AG04449 (cell line): ENCODE measurements at regions of chr6 and their contacts with region 1.

Region 1: DNA sequence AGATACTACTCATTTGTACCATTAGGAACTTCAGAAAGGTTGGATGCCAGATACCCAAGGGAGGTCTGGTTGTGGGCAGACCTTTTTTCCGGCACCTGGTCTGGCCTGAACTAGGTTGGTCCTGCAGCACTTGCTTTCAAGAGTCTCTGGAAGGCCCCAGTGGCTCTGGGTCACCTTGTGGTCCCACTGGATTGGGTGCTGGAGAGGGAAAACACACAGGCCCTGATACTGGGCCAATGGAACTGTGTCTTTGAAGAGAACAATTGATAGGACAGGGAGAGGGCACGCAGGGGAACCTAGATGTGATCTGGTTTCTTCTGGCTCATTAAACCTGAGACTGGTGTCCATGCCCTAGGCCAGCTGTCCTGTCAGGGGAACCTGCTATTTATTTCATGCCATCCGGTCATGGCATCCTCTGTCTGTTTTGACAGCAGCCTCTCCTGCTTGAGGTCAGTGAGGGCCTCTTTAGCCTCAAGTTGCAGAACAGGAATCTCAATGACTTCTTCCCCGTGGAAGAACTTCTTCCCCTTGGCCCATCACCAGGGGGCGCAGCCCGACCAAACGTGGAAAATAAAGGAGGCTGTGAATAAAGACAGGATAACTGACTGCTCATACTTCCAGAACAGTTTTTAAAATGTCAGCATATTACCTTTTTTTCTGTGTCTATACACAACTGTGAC is 25.0 kb downstream of the TAF8 start:
- DNase-seq: no peak
- H3K4me3 ChIP-seq: no peak overlapping the region
- CTCF ChIP-seq: peak; percentile 79

Region 2: DNA sequence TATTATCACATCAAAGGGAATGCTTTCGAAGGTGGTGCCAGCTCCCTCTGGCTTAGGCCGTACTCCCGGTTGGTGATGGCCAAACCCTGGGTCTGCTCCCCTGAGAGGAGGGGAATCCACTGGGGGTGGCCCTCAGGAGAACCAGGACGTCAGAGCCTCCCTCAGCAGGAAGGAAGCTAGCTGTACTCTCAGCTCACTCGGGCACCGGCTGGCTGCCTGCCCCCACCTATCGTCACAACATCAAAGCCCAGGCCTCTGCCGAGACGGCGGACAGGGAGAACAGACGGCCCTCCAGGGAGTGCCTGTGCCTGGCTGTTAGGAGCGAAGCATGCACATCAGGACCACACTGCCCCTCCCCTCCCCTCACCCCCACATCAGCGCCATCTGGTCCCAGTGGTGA is 318.9 kb before region 1 on chr6:
- CTCF ChIA-PET with region 1: no interaction called
- POLR2A ChIA-PET with region 1: no interaction called
- DNase-seq: no peak
- H3K4me3 ChIP-seq: no peak overlapping the region
- CTCF ChIP-seq: no peak

Region 3: GRCh38 chr6:42059743-42060142 is 15.6 kb before region 1 on chr6:
- CTCF ChIA-PET with region 1: interaction called, 22 read pairs
- POLR2A ChIA-PET with region 1: no interaction called
- DNase-seq: no peak
- H3K4me3 ChIP-seq: no peak overlapping the region
- CTCF ChIP-seq: no peak